ENCODE measurements at regions of chr1 and their contacts with region 1.

Region 1: DNA sequence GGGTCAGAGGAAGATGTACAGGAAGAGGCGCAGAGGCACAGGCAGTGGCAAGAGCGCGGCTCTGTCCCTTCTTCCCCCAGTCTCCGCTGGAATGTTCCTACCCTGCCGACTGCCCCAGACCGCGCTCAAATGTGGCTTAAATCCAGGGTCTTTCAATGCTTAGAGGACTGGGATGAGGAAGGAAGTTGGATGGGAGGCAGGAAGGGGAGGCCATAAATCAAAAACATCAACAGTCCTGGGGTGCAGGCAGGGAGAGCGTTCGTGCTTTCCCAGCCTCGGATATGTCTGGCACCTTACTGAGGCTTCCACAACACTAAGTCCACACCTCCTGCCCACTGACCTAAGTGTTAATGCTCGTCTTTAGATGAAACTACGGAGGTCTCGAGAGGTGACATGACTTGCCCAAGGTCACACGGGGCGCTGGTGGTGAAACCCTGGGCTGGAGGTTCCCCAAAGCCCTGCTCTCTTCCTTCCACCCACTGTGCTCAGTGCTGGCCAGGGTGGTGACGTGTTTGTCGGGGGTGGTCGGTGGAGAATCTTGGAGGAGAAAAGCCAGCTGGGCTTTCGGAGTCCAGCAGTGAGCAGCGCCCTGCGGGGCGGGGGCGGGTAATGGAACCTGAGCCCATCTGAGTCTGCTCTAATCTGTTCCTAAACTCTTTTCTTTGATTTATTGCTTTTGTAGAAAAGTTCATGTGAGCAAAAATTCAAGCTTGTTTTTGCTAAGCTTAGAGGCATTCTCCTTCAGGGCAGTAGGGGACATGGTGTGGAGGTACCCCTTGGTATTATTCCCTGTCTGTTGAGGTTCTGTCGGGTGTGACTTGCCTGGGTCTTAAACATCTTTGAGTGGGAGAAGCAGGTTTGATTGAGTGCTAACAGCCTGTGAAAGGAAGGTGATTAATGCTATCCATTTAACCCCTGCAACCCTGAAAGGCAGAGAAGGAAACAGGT is 708 bp downstream of the CDA start:
- DNase-seq: no peak
- H3K27ac ChIP-seq: no peak overlapping the region
- CTCF ChIP-seq: no peak

Region 2: GRCh38 chr1:20633190-20634064 is 43.8 kb after region 1 on chr1 and contains the start of gene PINK1:
- CTCF ChIA-PET with region 1: interaction called, 10 read pairs
- POLR2A ChIA-PET with region 1: interaction called, 4 read pairs
- DNase-seq: peak; percentile 90
- H3K27ac ChIP-seq: peak within 1 kb of the TSS; percentile 86
- CTCF ChIP-seq: peak; percentile 98

Measured in RWPE1 (cell line).